K562 (cell line): ENCODE measurements at regions of chr7 and their contacts with region 1.

Region 1: GRCh38 chr7:142603870-142604448 is 145.3 kb upstream of the PRSS1 start:
- DNase-seq: peak; percentile 75 to 83 (median 80)
- ATAC-seq: peak; percentile 80
- H3K4me3 ChIP-seq: no peak overlapping the region
- H3K27ac ChIP-seq: no peak overlapping the region
- H3K4me1 ChIP-seq: no peaks in the 10 kb centered on the region; a peak in 1 of 5 replicates
- H3K27me3 ChIP-seq: peaks cover 2 to 10% of the 10 kb centered on the region in 2 experiments; a peak in 2 of 5 replicates
- CTCF ChIP-seq: peak; percentile 85 to 94 (median 90)
- EP300 ChIP-seq: no peak
- POLR2A ChIP-seq: no peak
- RAD21 ChIP-seq: peak; percentile 84 to 93

Region 2: DNA sequence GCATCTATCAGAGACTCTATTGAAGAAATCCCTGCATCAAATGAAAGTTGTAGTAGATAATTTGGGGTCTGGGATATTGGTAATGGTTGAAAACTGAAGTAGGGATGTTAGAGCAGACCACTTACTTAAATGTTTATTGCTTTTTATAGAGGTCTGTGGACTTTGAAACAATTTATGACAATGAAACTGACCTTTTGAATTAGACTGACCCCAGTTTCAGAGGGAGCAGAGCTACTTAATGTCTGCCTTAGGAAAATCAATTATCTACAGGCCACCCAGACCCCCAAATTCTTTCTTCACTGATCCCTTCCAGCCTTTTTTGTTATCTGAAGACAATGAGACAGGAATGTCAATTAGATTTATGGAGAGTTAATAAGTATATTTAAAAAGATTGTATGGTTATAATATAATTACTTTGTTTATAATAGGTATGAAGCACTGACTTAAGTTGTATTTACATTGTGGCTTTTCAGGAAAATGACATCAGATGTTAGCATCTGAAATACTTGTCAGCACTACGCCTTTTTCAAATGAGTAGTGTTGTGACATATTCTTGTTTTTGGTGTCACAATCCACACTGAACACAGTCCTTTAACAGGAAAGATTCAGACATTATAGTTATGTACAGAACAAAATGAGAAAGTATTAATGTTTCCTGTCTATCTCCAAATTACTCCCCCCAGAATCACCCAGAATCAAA is 478.6 kb before region 1 on chr7:
- CTCF ChIA-PET with region 1: no interaction called
- POLR2A ChIA-PET with region 1: no interaction called
- in situ Hi-C with region 1: no loop called
- intact Hi-C with region 1: no loop called
- DNase-seq: no peak
- ATAC-seq: no peak
- H3K4me3 ChIP-seq: no peak overlapping the region
- H3K27ac ChIP-seq: no peak overlapping the region
- H3K4me1 ChIP-seq: no peaks in the 10 kb centered on the region
- H3K27me3 ChIP-seq: no peaks in the 10 kb centered on the region
- CTCF ChIP-seq: no peak
- EP300 ChIP-seq: no peak
- POLR2A ChIP-seq: no peak
- RAD21 ChIP-seq: no peak

Region 3: DNA sequence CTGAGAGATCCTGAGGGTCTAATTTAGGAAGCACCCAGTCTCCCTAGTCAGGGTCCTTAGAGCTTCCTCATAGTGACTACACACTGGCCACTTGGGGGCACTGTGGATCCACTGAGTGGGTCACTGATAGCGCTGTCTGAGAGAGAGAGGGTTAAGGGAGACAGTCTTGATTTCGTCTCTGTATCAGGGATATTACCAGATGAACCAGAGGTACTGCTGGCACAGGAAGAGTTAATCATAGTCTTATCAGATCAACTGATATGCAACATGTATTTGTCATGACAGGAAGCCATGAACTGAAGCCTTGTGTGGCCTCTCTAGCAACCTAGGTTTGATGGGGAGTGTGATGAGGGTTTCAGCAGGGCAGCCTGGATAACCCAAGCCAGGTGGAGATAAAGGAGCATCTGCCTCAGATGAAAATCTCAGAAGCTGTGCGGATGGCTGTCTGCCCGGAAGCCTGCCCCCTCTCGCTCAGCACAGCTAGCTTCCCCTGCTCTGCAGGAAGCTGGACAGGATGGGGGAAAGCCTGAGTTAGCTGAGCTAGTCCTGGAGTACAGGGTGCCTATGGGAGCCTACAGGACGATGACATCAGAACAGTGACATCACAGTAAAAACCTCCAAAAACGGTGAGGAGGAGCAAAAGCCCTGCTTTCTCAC is 68.7 kb before region 1 on chr7:
- CTCF ChIA-PET with region 1: no interaction called
- POLR2A ChIA-PET with region 1: no interaction called
- in situ Hi-C with region 1: no loop called
- intact Hi-C with region 1: loop called (anchors 1 kb)
- DNase-seq: peak; percentile 61 to 82 (median 70)
- ATAC-seq: peak; percentile 100
- H3K4me3 ChIP-seq: no peak overlapping the region
- H3K27ac ChIP-seq: no peak overlapping the region
- H3K4me1 ChIP-seq: no peaks in the 10 kb centered on the region
- H3K27me3 ChIP-seq: peaks cover 0 to 3% of the 10 kb centered on the region in 2 experiments; a peak in 3 of 5 replicates
- CTCF ChIP-seq: peak; percentile 91 to 96 (median 92)
- EP300 ChIP-seq: no peak
- POLR2A ChIP-seq: no peak
- RAD21 ChIP-seq: peak; percentile 74 to 76

Region 4: DNA sequence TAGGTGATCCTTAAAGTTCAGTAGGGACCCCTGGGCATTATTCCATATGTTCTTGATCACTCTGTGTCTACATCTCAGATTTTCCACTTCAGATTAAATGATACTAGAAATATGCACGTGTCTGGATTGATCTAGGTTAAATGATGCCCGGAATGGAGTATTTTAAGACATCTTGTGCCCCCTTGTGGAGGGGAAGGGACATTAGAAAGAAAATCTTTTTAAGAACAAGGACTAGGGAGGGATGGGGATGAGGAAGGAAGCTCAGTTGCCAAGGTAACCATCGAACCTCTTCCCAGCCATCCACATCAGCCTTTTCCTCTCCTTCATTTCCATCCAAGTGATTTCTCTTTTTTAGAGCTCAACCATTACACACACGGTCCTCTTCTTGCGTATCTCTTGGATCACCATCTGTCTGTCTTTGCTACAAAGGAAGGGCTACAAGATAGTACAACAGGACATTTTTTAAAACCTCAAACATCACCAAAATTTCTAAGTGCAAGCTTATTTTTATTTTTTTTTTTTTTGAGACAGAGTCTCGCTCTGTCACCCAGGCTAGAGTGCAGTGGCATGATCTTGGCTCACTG is 207.3 kb after region 1 on chr7:
- CTCF ChIA-PET with region 1: interaction called, 9 read pairs
- POLR2A ChIA-PET with region 1: no interaction called
- in situ Hi-C with region 1: no loop called
- intact Hi-C with region 1: loop called (anchors 1 kb)
- DNase-seq: peak; percentile 70 to 77 (median 74)
- ATAC-seq: peak; percentile 82
- H3K4me3 ChIP-seq: no peak overlapping the region
- H3K27ac ChIP-seq: no peak overlapping the region
- H3K4me1 ChIP-seq: peaks cover 0 to 44% of the 10 kb centered on the region in 2 experiments; a peak in 3 of 5 replicates
- H3K27me3 ChIP-seq: no peaks in the 10 kb centered on the region; a peak in 1 of 5 replicates
- CTCF ChIP-seq: peak; percentile 67 to 86 (median 83); a peak in 5 of 6 replicates
- EP300 ChIP-seq: no peak
- POLR2A ChIP-seq: no peak
- RAD21 ChIP-seq: peak; percentile 83 to 85

Region 5: DNA sequence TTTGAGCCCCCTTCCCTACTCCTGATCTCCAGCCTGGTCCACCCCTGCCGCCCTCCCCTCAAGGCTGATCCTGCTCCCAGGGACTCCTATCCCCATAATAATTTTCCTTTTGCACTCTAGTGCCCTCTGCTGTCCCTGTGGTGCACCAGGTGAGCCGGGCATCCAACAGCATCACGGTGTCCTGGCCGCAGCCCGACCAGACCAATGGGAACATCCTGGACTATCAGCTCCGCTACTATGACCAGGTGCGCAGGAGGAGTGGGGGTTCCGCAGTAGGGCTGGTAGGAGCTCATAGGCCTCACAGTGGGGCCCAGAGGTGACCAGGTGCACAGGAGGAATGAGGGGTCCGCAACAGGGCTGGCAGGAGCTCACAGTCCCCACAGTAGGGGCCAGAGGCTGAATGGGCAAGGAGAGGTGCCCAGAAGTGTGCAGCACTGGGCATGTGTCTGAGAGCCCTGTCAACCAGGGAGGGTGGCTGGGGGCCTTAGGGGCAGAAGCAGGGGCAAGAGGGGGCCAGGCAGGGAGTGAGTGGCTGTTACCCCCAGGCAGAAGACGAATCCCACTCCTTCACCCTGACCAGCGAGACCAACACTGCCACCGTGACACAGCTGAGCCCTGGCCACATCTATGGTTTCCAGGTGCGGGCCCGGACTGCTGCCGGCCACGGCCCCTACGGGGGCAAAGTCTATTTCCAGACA is 262.6 kb after region 1 on chr7:
- CTCF ChIA-PET with region 1: no interaction called
- POLR2A ChIA-PET with region 1: no interaction called
- in situ Hi-C with region 1: no loop called
- intact Hi-C with region 1: loop called (anchors 1 kb)
- DNase-seq: peak; percentile 70 to 78 (median 75)
- ATAC-seq: peak; percentile 87
- H3K4me3 ChIP-seq: no peak overlapping the region
- H3K27ac ChIP-seq: no peak overlapping the region
- H3K4me1 ChIP-seq: peaks cover 0 to 30% of the 10 kb centered on the region in 2 experiments; a peak in 1 of 5 replicates
- H3K27me3 ChIP-seq: peaks cover 11 to 64% of the 10 kb centered on the region in 2 experiments; a peak in 4 of 5 replicates
- CTCF ChIP-seq: peak; percentile 82 to 88 (median 85)
- EP300 ChIP-seq: no peak
- POLR2A ChIP-seq: no peak
- RAD21 ChIP-seq: peak; percentile 70 to 72